Caco-2 (cell line): ENCODE measurements at regions of chr9 and their contacts with region 1.

Region 1: DNA sequence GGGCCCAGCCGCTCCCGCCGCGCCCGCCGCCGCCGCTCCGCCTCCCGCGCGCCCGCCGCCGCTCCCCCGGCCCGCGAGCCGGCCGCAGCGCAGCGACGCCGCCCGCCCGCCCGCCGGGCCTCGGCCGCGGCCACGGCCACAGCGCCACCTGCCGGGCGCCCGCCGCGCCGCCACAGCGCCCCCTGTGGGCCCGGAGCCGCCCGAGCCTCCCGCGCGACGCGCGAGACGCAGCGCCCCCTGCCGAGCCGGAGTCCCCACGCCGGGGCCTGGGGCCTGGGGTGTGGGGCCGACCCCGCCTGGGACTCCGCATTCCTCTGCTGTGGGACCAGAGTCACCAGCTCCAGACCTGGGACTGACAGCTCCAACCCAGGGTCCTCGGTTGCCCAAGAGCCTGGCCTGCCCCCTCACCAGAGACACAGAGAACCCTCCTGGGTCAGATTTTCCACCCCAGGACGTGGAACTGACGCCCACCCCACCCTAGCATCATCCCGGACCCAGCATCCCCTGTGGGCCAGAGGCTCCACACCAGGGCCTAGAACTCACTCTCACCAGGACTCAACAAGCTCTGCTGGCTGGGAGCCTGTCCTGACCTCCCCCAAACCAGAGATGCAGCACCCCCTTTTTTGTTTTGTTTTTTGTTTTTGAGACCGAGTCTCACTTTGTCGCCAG is at the start of gene RAPGEF1:
- DNase-seq: peak; percentile 56 to 90
- H3K4me3 ChIP-seq: peak within 1 kb of the TSS; percentile 65
- H3K4me3 Mint-ChIP-seq: peak within 1 kb of the TSS; percentile 81
- H3K27ac Mint-ChIP-seq: peak within 1 kb of the TSS; percentile 74
- H3K4me1 ChIP-seq: peaks cover 39% of the 10 kb centered on the region
- H3K4me1 Mint-ChIP-seq: peaks cover 24% of the 10 kb centered on the region
- H3K27me3 ChIP-seq: no peaks in the 10 kb centered on the region
- H3K27me3 Mint-ChIP-seq: no peaks in the 10 kb centered on the region
- CTCF ChIP-seq: peak; percentile 71 to 96
- total RNA-seq, gene RAPGEF1: 71.5 and 75.4 TPM in 2 replicates

Region 2: GRCh38 chr9:131366761-131367401 is 373.2 kb before region 1 on chr9:
- CTCF ChIA-PET with region 1: interaction called, 3 read pairs
- POLR2A ChIA-PET with region 1: no interaction called
- intact Hi-C with region 1: loop called (anchors 10 kb)
- DNase-seq: peak; percentile 80 to 85
- H3K4me3 ChIP-seq: no peak overlapping the region
- H3K4me3 Mint-ChIP-seq: no peak overlapping the region
- H3K27ac Mint-ChIP-seq: peak overlapping the region; percentile 88
- H3K4me1 ChIP-seq: peaks cover 10% of the 10 kb centered on the region; the same call in 1 of the 2 replicates
- H3K4me1 Mint-ChIP-seq: peaks cover 10% of the 10 kb centered on the region
- H3K27me3 ChIP-seq: no peaks in the 10 kb centered on the region
- H3K27me3 Mint-ChIP-seq: no peaks in the 10 kb centered on the region
- CTCF ChIP-seq: peak; percentile 51 to 58

Region 3: GRCh38 chr9:131608493-131609037 is 131.5 kb before region 1 on chr9:
- CTCF ChIA-PET with region 1: interaction called, 4 read pairs
- POLR2A ChIA-PET with region 1: no interaction called
- intact Hi-C with region 1: loop called (anchors 5 kb)
- DNase-seq: peak; percentile 70 to 79
- H3K4me3 ChIP-seq: no peak overlapping the region
- H3K4me3 Mint-ChIP-seq: peak overlapping the region; percentile 26
- H3K27ac Mint-ChIP-seq: peak overlapping the region; percentile 50
- H3K4me1 ChIP-seq: peaks cover 38% of the 10 kb centered on the region
- H3K4me1 Mint-ChIP-seq: peaks cover 31% of the 10 kb centered on the region
- H3K27me3 ChIP-seq: no peaks in the 10 kb centered on the region
- H3K27me3 Mint-ChIP-seq: no peaks in the 10 kb centered on the region
- CTCF ChIP-seq: no peak

Region 4: DNA sequence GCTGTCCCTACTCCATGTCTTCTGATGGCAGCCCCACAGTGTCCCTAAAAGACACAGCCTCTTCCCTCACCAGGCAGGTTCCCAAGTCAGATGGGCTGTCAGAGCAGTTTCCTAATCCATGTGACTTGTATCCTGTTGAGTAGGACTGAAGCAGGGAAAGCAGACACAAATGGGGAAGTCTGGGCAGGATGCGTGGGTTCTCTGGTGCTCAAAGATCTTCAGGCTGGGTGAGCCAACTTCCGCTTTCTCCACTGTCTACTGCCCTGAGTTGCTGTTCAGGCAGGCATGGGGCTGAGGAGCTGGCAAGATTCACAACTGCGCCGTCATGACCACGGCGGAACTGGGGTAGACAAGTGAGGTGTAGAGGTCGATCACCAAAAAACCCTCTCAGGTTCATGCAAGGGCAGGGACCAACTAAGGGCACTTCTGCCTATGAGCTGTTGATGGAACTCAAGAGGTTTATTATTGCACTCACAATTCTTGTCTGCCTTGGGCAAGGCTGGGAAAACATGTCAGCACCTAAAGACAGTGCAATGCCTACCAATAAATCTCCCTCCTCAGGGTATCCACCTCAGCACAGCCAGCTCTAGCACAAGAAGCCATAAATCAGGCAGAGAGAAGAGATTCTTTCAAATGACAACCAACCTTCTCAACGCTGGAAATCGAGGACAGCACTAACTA is 83.6 kb before region 1 on chr9:
- CTCF ChIA-PET with region 1: interaction called, 4 read pairs
- POLR2A ChIA-PET with region 1: no interaction called
- intact Hi-C with region 1: loop called (anchors 5 kb)
- DNase-seq: no peak
- H3K4me3 ChIP-seq: no peak overlapping the region
- H3K4me3 Mint-ChIP-seq: no peak overlapping the region
- H3K27ac Mint-ChIP-seq: no peak overlapping the region
- H3K4me1 ChIP-seq: peaks cover 29% of the 10 kb centered on the region
- H3K4me1 Mint-ChIP-seq: peaks cover 33% of the 10 kb centered on the region
- H3K27me3 ChIP-seq: no peaks in the 10 kb centered on the region
- H3K27me3 Mint-ChIP-seq: no peaks in the 10 kb centered on the region
- CTCF ChIP-seq: no peak

Region 5: GRCh38 chr9:131815971-131816873 is 76.1 kb after region 1 on chr9:
- CTCF ChIA-PET with region 1: no interaction called
- POLR2A ChIA-PET with region 1: no interaction called
- intact Hi-C with region 1: no loop called
- DNase-seq: peak in 1 of 2 experiments; percentile 16
- H3K4me3 ChIP-seq: no peak overlapping the region
- H3K4me3 Mint-ChIP-seq: no peak overlapping the region
- H3K27ac Mint-ChIP-seq: no peak overlapping the region
- H3K4me1 ChIP-seq: no peaks in the 10 kb centered on the region
- H3K4me1 Mint-ChIP-seq: no peaks in the 10 kb centered on the region
- H3K27me3 ChIP-seq: no peaks in the 10 kb centered on the region
- H3K27me3 Mint-ChIP-seq: peaks cover 27% of the 10 kb centered on the region
- CTCF ChIP-seq: no peak